Ascending aorta (tissue), 2 donors: ENCODE measurements at regions of chr4 and their contacts with region 1.

Region 1: GRCh38 chr4:125314676-125315575 is at the start of gene FAT4:
- DNase-seq: peak; percentile 83 to 97
- H3K4me3 ChIP-seq: peak within 1 kb of the TSS; percentile 87 to 97
- H3K27ac ChIP-seq: peak within 1 kb of the TSS; percentile 96
- H3K4me1 ChIP-seq: peaks cover 0 to 12% of the 10 kb centered on the region in 2 donors
- H3K27me3 ChIP-seq: no peaks in the 10 kb centered on the region
- CTCF ChIP-seq: peak in 1 of 3 experiments; percentile 18
- total RNA-seq, gene FAT4: 16.8 TPM

Region 2: DNA sequence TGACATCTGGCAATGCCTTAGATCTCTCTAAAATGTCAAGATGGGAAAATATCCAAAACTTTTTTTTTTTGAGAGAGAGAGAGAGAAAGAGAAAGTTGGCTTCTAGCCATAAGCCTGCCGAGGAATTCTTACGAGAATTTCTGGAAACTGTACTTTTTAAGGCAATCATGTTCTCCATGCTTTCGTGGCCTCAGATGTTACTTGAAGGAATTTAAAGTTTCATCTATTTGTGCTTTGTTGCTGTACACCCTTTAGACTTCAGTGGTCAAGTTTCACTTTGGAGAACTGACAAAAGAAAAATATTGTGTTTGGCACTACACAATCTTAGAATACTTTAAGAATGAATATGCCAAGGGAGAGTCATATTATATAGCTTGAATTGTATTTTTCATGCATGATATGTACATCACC is 53.8 kb after region 1 on chr4:
- intact Hi-C with region 1: loop called (anchors 2 kb)
- DNase-seq: no peak
- H3K4me3 ChIP-seq: peak overlapping the region; percentile 49 to 53
- H3K27ac ChIP-seq: peak overlapping the region; percentile 55 to 65
- H3K4me1 ChIP-seq: peaks cover 0 to 11% of the 10 kb centered on the region in 2 donors
- H3K27me3 ChIP-seq: no peaks in the 10 kb centered on the region
- CTCF ChIP-seq: no peak

Region 3: DNA sequence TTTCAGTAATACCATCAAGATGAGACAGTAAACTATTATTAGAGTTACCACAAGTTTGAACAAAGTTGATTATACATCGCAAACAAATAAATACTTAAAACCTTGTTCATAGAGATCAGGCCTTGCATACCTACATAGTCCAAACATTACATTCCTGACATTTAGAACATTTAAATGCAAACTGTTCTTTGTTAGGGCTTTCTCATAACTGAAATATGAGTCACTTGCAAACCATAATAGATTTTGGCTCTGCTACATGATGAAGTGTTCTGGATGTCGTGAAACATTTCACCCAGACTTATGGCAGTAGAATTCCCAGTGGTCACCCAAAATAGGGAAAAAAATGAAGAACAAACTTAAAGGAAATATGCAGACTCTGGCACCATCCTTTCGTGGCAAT is 74.8 kb after region 1 on chr4:
- intact Hi-C with region 1: loop called (anchors 1 kb)
- DNase-seq: no peak
- H3K4me3 ChIP-seq: no peak overlapping the region
- H3K27ac ChIP-seq: peak overlapping the region; percentile 83 to 91
- H3K4me1 ChIP-seq: peaks cover 9 to 30% of the 10 kb centered on the region in 2 donors
- H3K27me3 ChIP-seq: no peaks in the 10 kb centered on the region
- CTCF ChIP-seq: no peak

Region 4: GRCh38 chr4:125741825-125742452 is 427.0 kb after region 1 on chr4:
- intact Hi-C with region 1: loop called (anchors 2 kb)
- DNase-seq: no peak
- H3K4me3 ChIP-seq: no peak overlapping the region
- H3K27ac ChIP-seq: no peak overlapping the region
- H3K4me1 ChIP-seq: no peaks in the 10 kb centered on the region
- H3K27me3 ChIP-seq: no peaks in the 10 kb centered on the region
- CTCF ChIP-seq: peak; percentile 35 to 61 (median 40)

Region 5: DNA sequence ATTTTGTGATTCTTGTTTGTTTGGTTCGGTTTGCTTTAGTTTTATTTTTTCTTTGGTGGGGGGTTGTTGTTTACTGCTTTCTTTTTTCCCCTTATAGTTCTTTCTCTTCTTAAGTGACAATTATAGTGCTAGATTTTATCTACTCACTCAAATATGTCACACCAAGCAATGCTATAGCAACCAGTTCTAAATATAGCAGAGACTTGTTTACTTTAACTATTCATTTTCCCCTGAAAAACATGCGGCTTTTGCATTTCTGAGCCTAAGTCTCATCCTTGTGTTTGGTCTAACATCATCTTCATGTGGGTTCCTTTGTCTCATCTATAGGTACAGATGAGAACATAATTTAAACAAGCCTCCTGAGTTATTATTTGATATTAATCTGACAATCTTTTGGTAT is 676.5 kb after region 1 on chr4:
- intact Hi-C with region 1: loop called (anchors 5 kb)
- DNase-seq: no peak
- H3K4me3 ChIP-seq: no peak overlapping the region
- H3K27ac ChIP-seq: no peak overlapping the region
- H3K4me1 ChIP-seq: no peaks in the 10 kb centered on the region
- H3K27me3 ChIP-seq: no peaks in the 10 kb centered on the region
- CTCF ChIP-seq: no peak

Region 6: DNA sequence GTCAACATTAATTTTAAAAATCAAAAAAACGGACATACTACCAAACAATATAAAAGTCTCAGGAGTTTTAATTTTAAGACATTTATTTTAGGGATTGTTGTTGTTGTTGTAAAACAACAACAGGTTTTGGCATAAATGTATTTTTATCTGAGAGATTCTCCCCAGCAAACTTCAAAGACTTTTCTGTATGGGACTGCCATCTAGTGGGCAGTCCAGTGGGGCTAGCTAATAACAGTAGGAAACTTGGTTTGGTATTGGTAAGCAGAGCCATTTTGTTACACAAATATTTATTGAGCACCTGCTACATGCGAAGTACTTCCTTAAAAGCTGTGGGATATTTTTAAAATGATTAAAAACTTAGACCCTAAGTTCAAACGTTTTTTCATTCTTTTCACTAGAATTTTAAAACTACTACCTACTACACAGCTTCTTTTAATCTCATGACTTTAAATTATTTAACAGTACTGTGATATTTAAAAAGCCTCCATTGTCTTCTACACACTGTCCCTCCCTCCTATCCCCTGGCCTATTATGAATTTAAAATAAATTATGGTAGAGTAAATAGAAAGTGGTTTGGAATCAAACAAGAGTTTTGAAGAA is 1289.4 kb after region 1 on chr4:
- intact Hi-C with region 1: loop called (anchors 5 kb)
- DNase-seq: no peak
- H3K4me3 ChIP-seq: no peak overlapping the region
- H3K27ac ChIP-seq: no peak overlapping the region
- H3K4me1 ChIP-seq: no peaks in the 10 kb centered on the region
- H3K27me3 ChIP-seq: no peaks in the 10 kb centered on the region
- CTCF ChIP-seq: peak in 2 of 3 experiments; percentile 47 to 65